Activated CD4-positive, alpha-beta memory T cell treated with anti-CD3 and anti-CD28 coated beads for 36 hours (primary cell): ENCODE measurements at regions of chr6 and their contacts with region 1.

Region 1: DNA sequence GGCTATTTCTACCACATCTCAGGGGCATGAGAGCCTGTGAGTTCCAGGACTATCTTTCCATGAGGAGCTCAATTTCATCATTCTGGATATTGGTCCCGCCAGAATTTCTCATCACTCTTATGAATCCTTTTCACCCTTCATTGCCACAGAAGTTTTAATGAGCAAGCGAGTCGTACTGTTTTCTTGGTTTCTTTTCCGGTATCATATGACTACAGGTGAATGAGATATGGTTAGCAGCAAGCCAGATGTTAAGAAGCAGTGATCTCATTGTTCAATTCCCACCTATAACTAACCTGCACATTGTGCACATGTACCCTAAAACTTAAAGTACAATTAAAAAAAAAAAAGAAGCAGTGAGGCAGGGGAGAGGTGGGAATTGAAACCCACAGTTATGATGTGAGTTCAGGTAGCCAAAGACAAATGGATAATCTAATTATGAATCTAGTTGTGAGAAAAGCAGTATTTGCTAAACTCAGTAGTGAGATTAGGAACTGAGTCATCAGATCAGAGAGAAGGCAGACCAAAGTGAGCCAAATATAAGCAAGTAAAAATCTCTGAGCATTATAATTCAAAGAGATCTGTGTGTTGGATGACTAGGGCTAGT is 78.0 kb upstream of the ELOVL5 start:
- DNase-seq: no peak
- H3K4me3 Mint-ChIP-seq: no peak overlapping the region
- H3K27ac Mint-ChIP-seq: no peak overlapping the region
- H3K4me1 Mint-ChIP-seq: peaks cover 30% of the 10 kb centered on the region
- H3K27me3 Mint-ChIP-seq: peaks cover 11% of the 10 kb centered on the region

Region 2: DNA sequence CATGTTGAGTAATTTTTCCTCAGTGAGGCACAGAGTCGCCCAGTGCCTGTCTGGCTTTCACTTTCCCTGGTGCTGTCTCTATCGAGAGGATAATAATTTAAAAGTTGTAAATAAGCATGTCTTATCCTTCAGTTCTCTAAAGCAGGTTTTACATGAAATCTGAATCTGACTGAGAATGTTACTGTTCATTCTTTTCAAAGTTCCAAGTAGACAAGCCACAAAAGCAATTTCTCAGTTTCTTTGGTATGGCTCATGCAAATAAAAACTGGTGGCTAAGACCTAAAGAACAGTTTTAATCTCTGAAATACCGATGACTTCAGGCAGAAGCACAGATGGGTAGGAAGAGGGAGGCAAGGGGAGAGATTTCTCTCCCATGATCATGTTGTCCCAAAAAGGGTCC is 190.5 kb before region 1 on chr6:
- CTCF ChIA-PET with region 1: no interaction called
- POLR2A ChIA-PET with region 1: no interaction called
- intact Hi-C with region 1: loop called (anchors 1 kb)
- DNase-seq: peak; percentile 48
- H3K4me3 Mint-ChIP-seq: peak overlapping the region; percentile 49
- H3K27ac Mint-ChIP-seq: peak overlapping the region; percentile 53
- H3K4me1 Mint-ChIP-seq: peaks cover 56% of the 10 kb centered on the region
- H3K27me3 Mint-ChIP-seq: no peaks in the 10 kb centered on the region

Region 3: DNA sequence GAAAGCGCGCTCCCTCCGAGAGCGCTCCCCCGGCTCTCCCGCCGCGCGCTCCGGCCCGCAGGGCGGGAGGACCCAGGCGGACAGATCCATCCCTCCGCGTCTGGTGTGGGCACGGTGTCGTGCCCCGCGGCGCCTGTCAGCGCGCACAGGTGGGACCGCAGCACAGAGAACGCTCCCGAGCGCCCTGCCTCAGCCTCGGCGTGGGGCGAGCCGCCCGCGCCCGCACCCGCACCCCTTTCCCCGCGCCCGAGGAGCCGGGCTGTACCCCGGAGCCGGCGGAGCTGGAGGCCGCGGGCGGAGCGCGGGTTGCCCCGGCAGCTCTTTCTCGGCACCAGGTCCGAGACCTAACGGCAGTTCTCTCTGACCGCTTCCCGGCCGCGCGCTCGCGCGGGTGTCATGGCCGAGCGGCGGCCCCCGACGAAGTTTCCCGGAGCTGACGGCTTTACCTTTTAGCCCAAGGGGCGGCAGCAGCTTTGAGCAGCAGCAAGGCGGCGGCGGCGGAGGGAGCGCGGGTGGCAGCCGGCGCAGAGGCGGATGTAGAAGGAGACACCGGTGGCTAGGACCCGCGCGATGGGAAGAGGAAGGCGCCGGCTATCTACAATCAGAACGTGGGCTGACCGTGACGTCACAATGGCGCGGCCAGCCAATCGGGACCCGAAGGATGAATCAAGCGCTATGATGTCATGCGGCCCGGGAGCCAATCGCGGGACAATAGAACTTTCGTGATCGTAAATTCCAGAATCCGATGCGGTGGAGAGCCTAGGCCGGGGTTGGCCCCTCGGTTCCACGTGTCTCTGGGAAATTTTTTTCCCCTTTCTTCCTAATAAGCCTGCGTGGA is 78.2 kb before region 1 on chr6 and contains the start of gene ELOVL5:
- CTCF ChIA-PET with region 1: interaction called, 4 read pairs
- POLR2A ChIA-PET with region 1: no interaction called
- intact Hi-C with region 1: loop called (anchors 5 kb)
- DNase-seq: peak; percentile 98
- H3K4me3 Mint-ChIP-seq: peak within 1 kb of the TSS; percentile 93
- H3K27ac Mint-ChIP-seq: peak within 1 kb of the TSS; percentile 95
- H3K4me1 Mint-ChIP-seq: peaks cover 43% of the 10 kb centered on the region
- H3K27me3 Mint-ChIP-seq: no peaks in the 10 kb centered on the region
- total RNA-seq, gene ELOVL5: 112 to 121 TPM

Region 4: GRCh38 chr6:53410508-53411258 is 16.1 kb before region 1 on chr6:
- CTCF ChIA-PET with region 1: interaction called, 12 read pairs
- POLR2A ChIA-PET with region 1: no interaction called
- intact Hi-C with region 1: no loop called
- DNase-seq: peak; percentile 70
- H3K4me3 Mint-ChIP-seq: no peak overlapping the region
- H3K27ac Mint-ChIP-seq: no peak overlapping the region
- H3K4me1 Mint-ChIP-seq: peaks cover 3% of the 10 kb centered on the region
- H3K27me3 Mint-ChIP-seq: no peaks in the 10 kb centered on the region

Region 5: DNA sequence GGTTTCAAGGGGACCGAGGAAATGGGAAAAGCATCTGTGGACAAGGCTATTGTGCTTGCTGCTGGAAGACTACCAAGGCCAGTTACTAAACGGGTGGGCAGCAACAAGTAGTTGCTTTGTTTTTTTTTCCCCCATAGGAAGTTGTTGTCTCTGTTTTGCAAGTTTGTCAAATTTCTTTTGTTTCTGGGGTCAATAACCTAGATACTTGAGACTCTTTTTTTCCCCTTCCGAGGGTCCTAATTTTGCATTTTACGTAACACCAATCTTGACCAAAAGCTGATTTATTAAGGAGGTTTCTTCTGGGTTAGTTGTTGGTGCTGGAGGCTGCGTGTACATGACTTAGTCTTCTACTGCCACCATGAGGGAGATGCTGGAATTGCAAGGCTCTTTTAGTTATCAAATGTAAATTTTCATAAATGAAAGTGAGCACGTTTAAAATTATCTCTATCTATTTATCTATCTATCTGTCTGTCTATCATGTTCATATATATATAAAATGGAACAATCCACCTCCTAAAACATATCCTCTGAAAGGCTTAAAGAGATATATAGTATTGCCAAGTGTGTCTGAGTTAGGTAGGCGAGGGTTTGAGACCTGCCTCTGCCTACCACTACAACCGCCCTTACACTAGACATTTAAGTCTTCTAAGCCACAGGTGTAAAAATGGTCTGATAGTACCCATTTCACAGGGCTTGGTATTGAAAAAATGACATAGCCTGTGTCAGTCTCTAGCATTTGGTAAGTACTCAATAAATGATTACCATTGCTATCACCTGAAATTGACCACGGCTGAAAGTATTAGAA is 57.9 kb after region 1 on chr6:
- CTCF ChIA-PET with region 1: interaction called, 18 read pairs
- POLR2A ChIA-PET with region 1: no interaction called
- intact Hi-C with region 1: no loop called
- DNase-seq: peak; percentile 68
- H3K4me3 Mint-ChIP-seq: no peak overlapping the region
- H3K27ac Mint-ChIP-seq: no peak overlapping the region
- H3K4me1 Mint-ChIP-seq: peaks cover 9% of the 10 kb centered on the region
- H3K27me3 Mint-ChIP-seq: peaks cover 28% of the 10 kb centered on the region

Region 6: GRCh38 chr6:53504512-53504911 is 77.7 kb after region 1 on chr6:
- CTCF ChIA-PET with region 1: no interaction called
- POLR2A ChIA-PET with region 1: no interaction called
- intact Hi-C with region 1: no loop called
- DNase-seq: no peak
- H3K4me3 Mint-ChIP-seq: no peak overlapping the region
- H3K27ac Mint-ChIP-seq: no peak overlapping the region
- H3K4me1 Mint-ChIP-seq: no peaks in the 10 kb centered on the region
- H3K27me3 Mint-ChIP-seq: no peaks in the 10 kb centered on the region